Dorsolateral prefrontal cortex (tissue), 120 donors: ENCODE measurements at regions of chr21 and their contacts with region 1.

Region 1: GRCh38 chr21:26170471-26171257 is at the start of gene APP:
- DNase-seq: peak; percentile 67 to 90 (median 84)
- H3K4me3 ChIP-seq: peak within 1 kb of the TSS; percentile 62 to 98 (median 93)
- H3K27ac ChIP-seq: peak within 1 kb of the TSS; percentile 89 to 99 (median 97)
- H3K27me3 ChIP-seq: no peaks in the 10 kb centered on the region
- CTCF ChIP-seq: peak; percentile 59 to 100 (median 96)
- total RNA-seq, gene APP: 450 to 1,423 (median 1,116) TPM

Region 2: GRCh38 chr21:25881525-25882376 is 288.9 kb before region 1 on chr21:
- intact Hi-C with region 1: loop called (anchors 2 to 5 kb)
- DNase-seq: peak; percentile 57 to 82 (median 74)
- H3K4me3 ChIP-seq: no peak overlapping the region
- H3K27ac ChIP-seq: peak overlapping the region in 52 of 59 donors; percentile 4 to 76 (median 44)
- H3K27me3 ChIP-seq: no peaks in the 10 kb centered on the region
- CTCF ChIP-seq: peak; percentile 77 to 99 (median 97)

Region 3: GRCh38 chr21:25997788-25998611 is 172.7 kb before region 1 on chr21:
- intact Hi-C with region 1: loop called in 1 of 2 experiments (anchors 5 kb)
- DNase-seq: peak in 3 of 10 donors; percentile 12 to 56 (median 34)
- H3K4me3 ChIP-seq: peak overlapping the region in 3 of 59 donors; percentile 11 to 21 (median 20)
- H3K27ac ChIP-seq: peak overlapping the region; percentile 76 to 98 (median 95)
- H3K27me3 ChIP-seq: no peaks in the 10 kb centered on the region
- CTCF ChIP-seq: peak in 4 of 56 donors; percentile 13 to 18 (median 16)

Region 4: DNA sequence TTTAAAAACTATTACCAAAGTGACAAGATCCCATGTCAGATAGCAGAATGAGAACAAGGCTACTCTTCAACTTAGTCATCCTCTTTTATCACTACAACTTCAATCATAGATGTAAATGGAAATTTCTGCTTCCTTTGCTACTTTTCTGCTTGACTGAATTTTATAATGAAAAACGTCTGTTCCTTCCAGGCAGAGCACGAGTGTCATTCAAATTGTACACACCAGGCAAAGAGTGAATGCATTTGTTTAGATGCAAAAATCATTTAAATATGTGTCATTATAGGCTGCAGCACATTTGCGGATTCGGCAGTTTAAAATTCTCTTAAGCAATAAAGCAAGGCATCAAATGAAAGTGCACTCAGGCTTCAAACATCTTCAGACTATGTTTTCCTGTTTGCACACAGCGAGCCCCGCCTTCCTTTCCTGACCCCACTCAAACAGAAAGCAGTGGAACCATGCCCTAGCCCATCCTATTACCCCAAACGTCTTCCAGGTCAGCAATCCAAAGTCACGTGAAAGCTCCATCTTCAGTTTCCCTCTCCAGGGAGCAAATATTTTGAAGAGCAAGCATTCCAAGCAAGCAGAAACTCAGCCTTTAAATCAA is 99.7 kb before region 1 on chr21:
- intact Hi-C with region 1: no loop called
- DNase-seq: no peak
- H3K4me3 ChIP-seq: peak overlapping the region in 25 of 59 donors; percentile 1 to 41 (median 18)
- H3K27ac ChIP-seq: peak overlapping the region in 39 of 59 donors; percentile 2 to 67 (median 33)
- H3K27me3 ChIP-seq: no peaks in the 10 kb centered on the region
- CTCF ChIP-seq: no peak

Region 5: GRCh38 chr21:26116456-26117011 is 54.1 kb before region 1 on chr21:
- intact Hi-C with region 1: loop called (anchors 2 kb)
- DNase-seq: no peak
- H3K4me3 ChIP-seq: peak overlapping the region in 34 of 59 donors; percentile 0 to 50 (median 23)
- H3K27ac ChIP-seq: peak overlapping the region; percentile 52 to 99 (median 94)
- H3K27me3 ChIP-seq: no peaks in the 10 kb centered on the region
- CTCF ChIP-seq: no peak